Colonic mucosa (tissue), 4 donors: ENCODE measurements at regions of chr5 and their contacts with region 1.

Region 1: GRCh38 chr5:32232441-32233219 is 58.5 kb upstream of the GOLPH3 start:
- DNase-seq: peak; percentile 85
- H3K4me3 ChIP-seq: no peak overlapping the region
- H3K27ac ChIP-seq: no peak overlapping the region
- H3K4me1 ChIP-seq: no peaks in the 10 kb centered on the region
- H3K27me3 ChIP-seq: no peaks in the 10 kb centered on the region
- CTCF ChIP-seq: peak; percentile 82

Region 2: GRCh38 chr5:32312647-32313523 is 80.3 kb after region 1 on chr5 and contains the start of gene MTMR12:
- intact Hi-C with region 1: loop called (anchors 5 kb)
- DNase-seq: peak; percentile 100
- H3K4me3 ChIP-seq: peak within 1 kb of the TSS; percentile 86
- H3K27ac ChIP-seq: peak within 1 kb of the TSS; percentile 95
- H3K4me1 ChIP-seq: no peaks in the 10 kb centered on the region
- H3K27me3 ChIP-seq: no peaks in the 10 kb centered on the region
- CTCF ChIP-seq: no peak
- total RNA-seq, gene MTMR12: 23.2 to 23.8 TPM

Region 3: GRCh38 chr5:32329308-32329834 is 96.7 kb after region 1 on chr5:
- intact Hi-C with region 1: loop called (anchors 5 kb)
- DNase-seq: peak; percentile 83
- H3K4me3 ChIP-seq: no peak overlapping the region
- H3K27ac ChIP-seq: no peak overlapping the region
- H3K4me1 ChIP-seq: peaks cover 4% of the 10 kb centered on the region
- H3K27me3 ChIP-seq: no peaks in the 10 kb centered on the region
- CTCF ChIP-seq: peak; percentile 59

Region 4: DNA sequence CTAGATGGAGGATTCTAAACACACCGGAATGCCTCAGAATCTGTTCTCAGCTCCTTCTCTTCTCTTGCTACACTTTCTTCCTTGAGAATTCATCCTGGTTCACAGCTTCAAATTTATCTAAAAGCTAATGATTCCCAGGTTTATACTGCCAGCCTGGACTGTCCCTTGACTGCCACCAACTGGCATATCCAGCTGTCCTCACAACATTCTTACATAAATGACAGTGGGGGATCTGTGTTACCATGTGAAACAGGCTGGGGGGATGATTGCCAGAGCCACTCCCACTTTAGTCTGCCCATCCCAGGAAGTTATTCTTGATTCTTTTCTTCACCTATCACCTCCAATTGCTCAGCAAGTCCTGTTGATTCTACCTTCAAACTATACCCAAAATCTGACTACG is 239.2 kb after region 1 on chr5:
- intact Hi-C with region 1: loop called (anchors 5 kb)
- DNase-seq: no peak
- H3K4me3 ChIP-seq: no peak overlapping the region
- H3K27ac ChIP-seq: no peak overlapping the region
- H3K4me1 ChIP-seq: no peaks in the 10 kb centered on the region
- H3K27me3 ChIP-seq: no peaks in the 10 kb centered on the region
- CTCF ChIP-seq: no peak

Region 5: GRCh38 chr5:32585446-32586275 is 353.0 kb after region 1 on chr5 and contains the start of gene SUB1:
- intact Hi-C with region 1: loop called (anchors 5 kb)
- DNase-seq: peak; percentile 95
- H3K4me3 ChIP-seq: peak within 1 kb of the TSS; percentile 91
- H3K27ac ChIP-seq: peak within 1 kb of the TSS; percentile 99
- H3K4me1 ChIP-seq: peaks cover 6% of the 10 kb centered on the region
- H3K27me3 ChIP-seq: no peaks in the 10 kb centered on the region
- CTCF ChIP-seq: no peak
- total RNA-seq, gene SUB1: 193 to 227 TPM

Region 6: GRCh38 chr5:32613050-32613672 is 380.5 kb after region 1 on chr5:
- intact Hi-C with region 1: loop called (anchors 10 kb)
- DNase-seq: peak; percentile 90
- H3K4me3 ChIP-seq: no peak overlapping the region
- H3K27ac ChIP-seq: no peak overlapping the region
- H3K4me1 ChIP-seq: no peaks in the 10 kb centered on the region
- H3K27me3 ChIP-seq: no peaks in the 10 kb centered on the region
- CTCF ChIP-seq: peak; percentile 90